AG04450 (cell line): ENCODE measurements at regions of chr13 and their contacts with region 1.

Region 1: GRCh38 chr13:48370815-48371214 is 42.1 kb downstream of the LPAR6 start:
- DNase-seq: no peak
- H3K4me3 ChIP-seq: no peak overlapping the region
- H3K27ac ChIP-seq: no peak overlapping the region
- H3K27me3 ChIP-seq: no peaks in the 10 kb centered on the region
- CTCF ChIP-seq: no peak

Region 2: DNA sequence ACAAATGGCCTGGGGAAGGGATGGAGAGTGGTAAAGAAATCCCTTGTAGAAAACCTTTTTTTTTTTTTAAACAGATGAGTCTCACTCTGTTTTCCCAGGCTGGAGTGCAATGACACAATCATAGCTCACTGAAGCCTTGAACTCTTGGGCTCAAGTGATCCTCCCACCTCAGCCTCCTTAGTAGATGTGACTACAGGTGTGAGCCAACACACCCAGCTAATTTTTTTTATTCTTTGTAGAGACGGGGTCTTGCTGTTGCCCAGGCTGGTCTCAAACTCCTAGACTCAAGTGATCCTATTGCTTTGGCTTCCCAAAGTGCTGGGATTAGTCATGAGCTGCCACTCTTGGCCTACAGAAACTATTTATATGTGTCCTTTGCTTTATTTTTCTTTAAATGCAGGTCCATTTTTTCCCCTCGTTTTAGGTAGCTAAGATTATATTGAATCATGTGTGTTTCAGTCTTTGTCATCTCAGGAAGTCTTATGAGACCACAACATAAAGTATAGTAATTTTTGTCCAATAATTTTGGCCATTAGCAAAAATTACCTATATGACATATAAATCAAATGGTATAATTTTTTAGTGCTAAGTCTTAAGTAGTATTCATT is 31.6 kb after region 1 on chr13:
- CTCF ChIA-PET with region 1: no interaction called
- POLR2A ChIA-PET with region 1: interaction called, 10 read pairs
- DNase-seq: no peak
- H3K4me3 ChIP-seq: no peak overlapping the region
- H3K27ac ChIP-seq: no peak overlapping the region
- H3K27me3 ChIP-seq: no peaks in the 10 kb centered on the region
- CTCF ChIP-seq: no peak